Transverse colon (tissue), 4 donors: ENCODE measurements at regions of chr4 and their contacts with region 1.

Region 1: DNA sequence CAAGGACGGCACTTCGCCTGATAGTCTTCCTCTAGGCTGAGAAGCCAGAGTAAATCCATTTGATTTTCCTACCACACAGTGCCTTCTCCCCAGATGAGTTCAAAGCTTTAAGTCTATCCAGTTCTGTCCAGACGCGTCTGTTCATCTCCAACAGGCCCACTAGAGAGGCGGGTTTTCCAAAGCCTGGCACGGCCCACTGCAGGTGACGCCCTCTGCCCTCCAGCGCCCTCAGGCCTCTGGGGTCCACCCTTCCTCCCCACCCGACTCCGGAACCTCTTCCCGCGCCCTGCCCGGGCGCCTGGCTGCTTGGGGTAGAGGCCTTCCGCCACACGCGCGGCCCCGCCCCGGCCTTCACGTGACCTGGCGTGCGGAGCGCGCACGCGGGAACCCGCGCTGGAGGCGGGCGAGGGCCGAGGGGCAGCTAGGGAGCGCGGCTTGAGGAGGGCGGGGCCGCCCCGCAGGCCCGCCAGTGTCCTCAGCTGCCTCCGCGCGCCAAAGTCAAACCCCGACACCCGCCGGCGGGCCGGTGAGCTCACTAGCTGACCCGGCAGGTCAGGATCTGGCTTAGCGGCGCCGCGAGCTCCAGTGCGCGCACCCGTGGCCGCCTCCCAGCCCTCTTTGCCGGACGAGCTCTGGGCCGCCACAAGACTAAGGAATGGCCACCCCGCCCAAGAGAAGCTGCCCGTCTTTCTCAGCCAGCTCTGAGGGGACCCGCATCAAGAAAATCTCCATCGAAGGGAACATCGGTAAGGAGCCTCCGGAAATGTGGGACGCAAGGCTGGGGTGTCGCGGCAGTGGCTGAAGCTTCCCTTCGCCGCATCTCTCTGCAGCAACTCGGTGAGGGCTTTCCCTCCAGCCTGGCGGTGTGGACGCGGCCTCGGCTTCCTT is at the start of gene DCK:
- DNase-seq: peak; percentile 94
- H3K4me3 ChIP-seq: peak within 1 kb of the TSS; percentile 57 to 81 (median 70)
- H3K27ac ChIP-seq: peak within 1 kb of the TSS; percentile 87 to 92 (median 88)
- H3K4me1 ChIP-seq: peaks cover 8 to 49% (median 12%) of the 10 kb centered on the region in 4 donors
- H3K27me3 ChIP-seq: no peaks in the 10 kb centered on the region
- CTCF ChIP-seq: no peak
- EP300 ChIP-seq: no peak
- POLR2A ChIP-seq: peak; percentile 94
- total RNA-seq, gene DCK: 6.0 to 18.1 (median 15.9) TPM

Region 2: DNA sequence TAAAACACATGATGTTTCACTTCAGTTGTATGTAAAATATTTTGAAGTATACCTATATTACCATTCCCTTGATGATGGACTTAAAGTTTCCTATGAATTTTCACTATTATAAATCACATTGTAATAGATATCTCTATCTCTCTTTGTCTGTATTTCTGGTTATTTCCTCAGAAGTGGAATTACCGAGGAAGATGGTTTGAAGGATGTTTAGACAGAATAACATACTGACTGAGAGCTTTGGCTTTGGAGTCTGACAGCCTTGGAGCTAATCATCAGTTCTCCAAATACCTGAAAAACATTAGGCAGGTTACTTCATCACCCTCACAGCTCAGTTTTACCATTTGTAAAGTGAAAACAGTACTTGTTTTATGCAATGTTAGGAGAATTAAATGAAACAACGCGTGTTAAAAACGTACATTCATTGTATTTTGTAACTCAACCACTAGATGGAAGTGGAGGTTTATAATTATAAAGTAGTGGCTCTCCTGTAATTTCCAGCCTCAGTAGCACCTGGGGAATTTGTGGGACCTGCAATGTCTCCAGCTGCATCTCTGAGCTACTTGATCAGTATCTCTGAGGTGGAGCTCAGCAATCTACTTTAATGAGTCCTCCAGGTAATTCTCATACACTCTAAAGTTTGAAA is 341.4 kb before region 1 on chr4:
- in situ Hi-C with region 1: loop called in 1 of 4 experiments (anchors 25 kb)
- intact Hi-C with region 1: no loop called
- DNase-seq: no peak
- H3K4me3 ChIP-seq: no peak overlapping the region
- H3K27ac ChIP-seq: no peak overlapping the region
- H3K4me1 ChIP-seq: no peaks in the 10 kb centered on the region
- H3K27me3 ChIP-seq: no peaks in the 10 kb centered on the region
- CTCF ChIP-seq: peak; percentile 44 to 64 (median 49)
- EP300 ChIP-seq: no peak
- POLR2A ChIP-seq: no peak

Region 3: DNA sequence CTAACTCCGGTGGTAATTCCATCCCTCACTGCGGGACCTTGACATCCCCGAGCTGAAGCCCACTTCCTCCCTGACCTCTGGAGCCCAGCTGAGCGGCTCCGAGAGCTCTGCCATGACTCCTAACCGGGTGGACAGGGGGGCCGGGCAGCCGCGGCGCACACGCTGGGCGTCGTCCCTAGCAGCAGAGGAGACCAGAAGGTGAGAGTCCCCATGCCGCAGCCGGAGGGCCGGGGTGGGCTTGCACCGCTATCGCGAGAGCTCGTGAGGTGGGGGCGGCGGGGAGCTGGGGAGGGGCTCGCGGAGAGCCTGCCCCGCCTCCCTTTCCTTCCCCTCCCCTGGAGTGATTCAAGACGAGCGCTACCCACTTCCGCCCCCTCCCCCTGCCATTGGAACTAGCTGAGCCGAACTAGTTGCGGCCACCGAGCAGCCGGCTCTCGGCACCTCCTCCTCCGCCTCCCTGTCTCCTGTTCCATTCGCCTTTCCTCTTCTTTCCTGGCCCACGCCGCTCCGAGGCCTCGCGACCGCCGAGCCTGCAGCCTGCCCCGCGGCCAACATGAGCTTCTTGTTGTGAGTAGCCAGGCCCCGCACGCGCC is 91.3 kb before region 1 on chr4 and contains the start of gene MOB1B:
- in situ Hi-C with region 1: no loop called
- intact Hi-C with region 1: loop called (anchors 10 kb)
- DNase-seq: peak; percentile 87
- H3K4me3 ChIP-seq: peak within 1 kb of the TSS; percentile 65 to 91 (median 72)
- H3K27ac ChIP-seq: peak within 1 kb of the TSS; percentile 84 to 91 (median 88)
- H3K4me1 ChIP-seq: peaks cover 0 to 13% (median 5%) of the 10 kb centered on the region in 4 donors
- H3K27me3 ChIP-seq: no peaks in the 10 kb centered on the region
- CTCF ChIP-seq: peak; percentile 35 to 55 (median 40)
- EP300 ChIP-seq: no peak
- POLR2A ChIP-seq: peak; percentile 51
- total RNA-seq, gene MOB1B: 6.7 to 15.4 (median 11.0) TPM